ENCODE measurements at regions of chr19 and their contacts with region 1.

Region 1: GRCh38 chr19:18856385-18857126 is 24.8 kb downstream of the UPF1 start:
- DNase-seq: no peak
- ATAC-seq: no peak
- H3K4me3 ChIP-seq: no peak overlapping the region
- H3K27ac ChIP-seq: no peak overlapping the region
- H3K4me1 ChIP-seq: peaks cover 14% of the 10 kb centered on the region
- H3K27me3 ChIP-seq: no peaks in the 10 kb centered on the region
- CTCF ChIP-seq: no peak

Region 2: DNA sequence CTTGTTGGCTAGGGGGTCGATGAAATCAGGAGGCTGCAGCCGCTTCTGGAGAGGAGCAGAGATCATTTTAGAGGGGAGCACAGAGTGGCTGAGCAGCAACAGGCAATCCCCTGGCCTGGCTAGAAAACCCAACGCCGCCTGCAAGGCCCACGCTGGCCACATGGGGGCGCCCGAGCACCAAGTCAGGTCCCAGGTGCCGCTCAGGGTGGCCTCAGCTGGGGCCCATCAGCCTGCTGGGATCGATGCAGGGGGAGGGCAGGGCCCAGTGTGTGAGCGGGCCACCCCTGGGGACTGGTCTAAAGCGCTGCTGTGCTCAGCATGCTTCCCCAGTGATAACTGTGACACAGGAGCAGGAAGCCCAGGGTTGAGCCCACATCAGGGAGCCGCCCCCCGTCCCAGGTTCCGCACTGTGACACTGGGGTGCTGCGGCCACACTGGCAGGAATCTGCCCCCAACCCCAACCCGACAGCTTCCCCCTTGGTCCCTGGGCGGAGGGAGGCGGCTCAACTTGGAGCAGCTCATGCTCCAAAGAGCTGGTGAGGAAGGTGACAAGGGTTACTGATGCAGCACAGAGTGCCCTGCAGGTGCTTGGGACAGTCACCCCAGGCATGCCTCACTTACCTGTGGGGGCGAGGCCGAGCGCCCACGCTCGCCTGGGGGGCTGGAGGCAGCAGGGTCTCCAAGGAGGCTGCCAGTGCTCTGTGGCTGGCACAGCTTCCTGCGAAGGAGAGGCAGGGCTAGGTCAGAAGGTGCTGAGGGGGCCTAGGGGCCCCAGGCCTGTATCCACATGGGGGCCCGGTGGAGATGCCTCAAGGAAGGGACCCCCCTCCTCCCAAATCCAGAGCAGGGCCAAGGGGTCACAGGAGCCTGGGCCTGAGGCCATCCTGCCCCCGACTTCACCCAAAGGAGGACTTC is 405.4 kb before region 1 on chr19:
- intact Hi-C with region 1: loop called (anchors 10 kb)
- DNase-seq: peak; percentile 91
- ATAC-seq: peak; percentile 90
- H3K4me3 ChIP-seq: no peak overlapping the region
- H3K27ac ChIP-seq: no peak overlapping the region
- H3K4me1 ChIP-seq: peaks cover 4% of the 10 kb centered on the region
- H3K27me3 ChIP-seq: no peaks in the 10 kb centered on the region
- CTCF ChIP-seq: peak; percentile 97

Region 3: GRCh38 chr19:18589380-18590272 is 266.9 kb before region 1 on chr19:
- intact Hi-C with region 1: loop called (anchors 10 kb)
- DNase-seq: peak; percentile 90
- ATAC-seq: peak; percentile 77
- H3K4me3 ChIP-seq: peak overlapping the region; percentile 88
- H3K27ac ChIP-seq: peak overlapping the region; percentile 90
- H3K4me1 ChIP-seq: peaks cover 23% of the 10 kb centered on the region
- H3K27me3 ChIP-seq: no peaks in the 10 kb centered on the region
- CTCF ChIP-seq: no peak

Measured in upper lobe of right lung (tissue), 1 donor.